ENCODE measurements at regions of chr17 and their contacts with region 1.

Region 1: DNA sequence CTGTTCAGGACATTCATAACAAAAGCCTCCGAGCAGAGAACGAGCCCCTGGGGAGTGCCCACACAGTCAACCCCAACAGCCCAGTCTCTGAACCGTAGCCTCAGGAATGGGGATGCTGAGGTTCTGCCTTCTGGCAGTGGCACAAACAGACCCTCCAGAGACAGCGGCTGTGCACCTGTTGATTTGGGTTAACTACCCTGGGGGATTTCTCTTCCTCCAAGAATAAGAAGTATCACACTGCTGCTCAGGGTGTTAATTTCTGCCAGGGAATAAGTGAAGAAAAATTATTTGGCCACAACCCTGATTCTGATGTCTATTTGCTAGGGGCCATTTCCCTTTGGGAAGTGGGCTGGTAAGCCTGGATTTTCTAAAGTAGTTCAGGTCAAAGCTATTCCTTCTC is 51.0 kb upstream of the PIRT start:
- DNase-seq: no peak
- H3K4me3 ChIP-seq: no peak overlapping the region
- H3K27ac ChIP-seq: no peak overlapping the region
- H3K4me1 ChIP-seq: no peaks in the 10 kb centered on the region
- H3K27me3 ChIP-seq: no peaks in the 10 kb centered on the region
- CTCF ChIP-seq: no peak
- POLR2A ChIP-seq: no peak

Region 2: GRCh38 chr17:10803830-10804475 is 84.9 kb before region 1 on chr17 and contains the start of gene TMEM238L:
- intact Hi-C with region 1: no loop called
- DNase-seq: no peak
- H3K4me3 ChIP-seq: no peak within 1 kb of the TSS
- H3K27ac ChIP-seq: no peak within 1 kb of the TSS
- H3K4me1 ChIP-seq: no peaks in the 10 kb centered on the region
- H3K27me3 ChIP-seq: no peaks in the 10 kb centered on the region
- CTCF ChIP-seq: no peak
- POLR2A ChIP-seq: no peak
- total RNA-seq, gene TMEM238L: 0.66 TPM in 1 of 3 donors, not detected in the others

Region 3: DNA sequence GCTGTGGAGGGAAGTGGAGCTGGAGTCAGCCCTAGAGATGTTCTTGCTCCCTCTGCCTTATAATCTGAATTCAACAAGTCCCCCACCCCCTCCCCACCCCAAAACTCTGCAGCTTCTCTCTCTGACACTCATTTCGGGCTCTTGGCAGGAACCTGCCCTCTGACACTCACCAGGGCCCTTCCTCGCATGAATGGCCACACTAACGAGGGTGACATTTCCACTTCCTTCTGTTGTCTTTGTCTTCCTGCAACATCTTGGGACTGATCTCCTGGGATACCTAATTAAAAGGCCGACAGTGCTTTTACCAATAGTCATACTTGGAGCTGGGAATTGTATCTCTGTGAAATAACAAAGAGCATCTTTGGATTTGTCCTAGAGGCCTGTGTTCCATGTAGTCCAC is 56.0 kb after region 1 on chr17:
- intact Hi-C with region 1: loop called (anchors 2 kb)
- DNase-seq: no peak
- H3K4me3 ChIP-seq: no peak overlapping the region
- H3K27ac ChIP-seq: no peak overlapping the region
- H3K4me1 ChIP-seq: no peaks in the 10 kb centered on the region
- H3K27me3 ChIP-seq: no peaks in the 10 kb centered on the region
- CTCF ChIP-seq: no peak
- POLR2A ChIP-seq: no peak

Region 4: GRCh38 chr17:11221721-11222120 is 332.9 kb after region 1 on chr17:
- intact Hi-C with region 1: no loop called
- DNase-seq: no peak
- H3K4me3 ChIP-seq: no peak overlapping the region
- H3K27ac ChIP-seq: no peak overlapping the region
- H3K4me1 ChIP-seq: no peaks in the 10 kb centered on the region
- H3K27me3 ChIP-seq: peaks cover 0 to 11% of the 10 kb centered on the region in 2 donors
- CTCF ChIP-seq: no peak
- POLR2A ChIP-seq: no peak